ENCODE measurements at regions of chr11 and their contacts with region 1.

Region 1: GRCh38 chr11:67373925-67374618 is 674 bp upstream of the CLCF1 start:
- DNase-seq: peak; percentile 96 to 100
- ATAC-seq: peak; percentile 41 to 71
- H3K4me3 ChIP-seq: peak overlapping the region; percentile 68
- H3K27ac ChIP-seq: peak overlapping the region; percentile 95 to 100
- H3K4me1 ChIP-seq: peaks cover 73% of the 10 kb centered on the region
- CTCF ChIP-seq: peak; percentile 29
- EP300 ChIP-seq: peak; percentile 87 to 93; a peak in 4 of 5 replicates
- POLR2A ChIP-seq: peak; percentile 36
- RAD21 ChIP-seq: peak; percentile 41 to 58

Region 2: DNA sequence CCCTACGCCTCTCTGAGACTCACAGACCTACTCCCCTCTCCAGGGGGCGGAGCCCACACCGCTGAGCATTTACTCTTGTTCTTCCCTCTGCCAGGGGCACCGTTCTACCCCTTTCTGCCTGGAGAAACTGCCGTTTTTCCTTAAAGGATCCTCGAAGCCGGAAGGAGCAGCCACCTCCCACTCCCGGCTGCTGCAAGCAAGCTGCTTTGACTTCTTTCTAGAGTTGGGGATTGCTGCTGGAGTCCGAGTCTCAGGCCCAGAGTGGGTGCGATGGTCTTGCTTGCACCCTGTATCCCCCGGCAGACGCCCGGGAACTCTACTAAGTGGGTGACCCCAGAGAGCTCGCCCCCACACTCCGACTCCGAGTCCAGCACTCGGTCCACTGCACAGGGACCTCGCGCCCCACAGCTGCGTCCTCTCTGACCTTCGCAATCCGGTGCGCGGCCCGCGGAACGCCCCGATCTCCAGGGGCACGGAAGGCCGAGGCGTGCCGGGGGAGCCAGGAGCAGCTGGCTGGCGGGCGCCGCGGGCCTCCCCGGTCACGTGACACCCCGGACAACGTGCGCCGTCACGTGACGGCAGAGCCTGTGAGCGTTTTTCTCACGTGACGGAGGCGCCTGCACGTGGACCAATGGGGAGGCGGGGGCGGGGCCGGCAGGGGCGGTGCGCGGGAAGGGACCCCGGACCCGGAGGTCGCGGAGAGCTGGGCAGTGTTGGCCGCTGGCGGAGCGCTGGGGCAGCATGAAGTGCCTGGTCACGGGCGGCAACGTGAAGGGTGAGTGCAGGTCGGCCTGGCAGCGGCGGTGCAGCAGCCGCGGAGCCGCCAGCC is 17.4 kb after region 1 on chr11 and contains the start of gene RAD9A:
- CTCF ChIA-PET with region 1: interaction called, 626 read pairs
- POLR2A ChIA-PET with region 1: interaction called, 11 read pairs
- DNase-seq: peak; percentile 94 to 97
- ATAC-seq: peak; percentile 59 to 77
- H3K4me3 ChIP-seq: peak within 1 kb of the TSS; percentile 77
- H3K27ac ChIP-seq: peak within 1 kb of the TSS; percentile 85 to 90
- H3K4me1 ChIP-seq: peaks cover 19% of the 10 kb centered on the region; the same call in 2 of the 3 replicates
- CTCF ChIP-seq: no peak
- EP300 ChIP-seq: no peak; a peak in 1 of 5 replicates
- POLR2A ChIP-seq: peak; percentile 51
- RAD21 ChIP-seq: no peak
- polyA plus RNA-seq, gene RAD9A: 19.0 and 19.6 TPM in 2 replicates

Region 3: GRCh38 chr11:67439321-67439883 is 65.3 kb after region 1 on chr11:
- CTCF ChIA-PET with region 1: no interaction called
- POLR2A ChIA-PET with region 1: no interaction called
- DNase-seq: peak; percentile 53 to 68
- ATAC-seq: peak; percentile 30 to 66; a peak in 5 of 6 replicates
- H3K4me3 ChIP-seq: no peak overlapping the region
- H3K27ac ChIP-seq: no peak overlapping the region; a peak in 1 of 6 replicates
- H3K4me1 ChIP-seq: peaks cover 24% of the 10 kb centered on the region
- CTCF ChIP-seq: peak; percentile 29; the same call in 2 of the 3 replicates
- EP300 ChIP-seq: no peak
- POLR2A ChIP-seq: no peak
- RAD21 ChIP-seq: peak in 1 of 2 experiments; percentile 25; a peak in 1 of 5 replicates